Endothelial cell of umbilical vein (primary cell): ENCODE measurements at regions of chr2 and their contacts with region 1.

Region 1: DNA sequence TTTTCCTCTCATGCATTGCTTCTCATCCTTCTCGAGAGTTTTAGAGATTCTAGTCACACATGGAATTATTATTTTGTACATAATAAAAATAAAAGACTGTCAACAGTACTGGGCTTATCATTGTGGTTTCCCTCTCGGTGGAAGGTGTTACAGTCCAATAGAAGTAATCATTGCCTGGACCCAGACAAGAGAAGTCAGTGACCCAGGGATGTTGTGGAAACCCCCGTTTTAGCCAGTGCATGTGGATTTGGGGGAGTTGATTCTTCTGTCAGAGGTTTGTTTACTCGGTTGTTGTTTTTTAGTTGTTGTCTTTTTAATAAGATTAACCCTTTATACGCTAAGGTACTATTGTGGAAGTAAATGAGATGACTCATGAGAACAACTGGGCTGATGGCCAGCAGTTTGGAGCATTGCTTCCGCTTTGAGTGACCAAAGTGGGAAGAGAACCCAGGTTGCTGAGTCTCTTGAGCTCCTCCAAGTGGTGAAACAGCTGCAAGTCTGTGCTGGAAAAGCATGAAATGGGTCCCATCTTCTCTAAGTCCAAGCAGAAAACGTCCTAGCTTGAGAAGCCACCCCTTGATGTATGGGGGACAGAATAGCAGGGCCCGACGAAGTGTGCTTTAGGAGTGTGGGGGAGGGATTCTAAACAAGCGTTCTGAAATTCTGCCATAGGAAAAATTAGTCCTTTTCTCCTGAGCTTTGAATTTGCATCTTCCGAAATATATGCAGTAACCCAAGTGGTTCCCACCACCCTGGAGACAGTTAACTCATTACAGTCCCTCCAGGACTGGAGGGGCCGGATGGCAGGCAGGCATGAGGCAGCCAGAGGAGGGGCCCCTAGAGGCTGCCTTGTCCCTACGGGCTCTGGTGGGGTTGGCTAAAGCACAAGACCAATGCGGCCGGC is 61.8 kb upstream of the GPR45 start:
- DNase-seq: peak; percentile 77
- H3K4me3 ChIP-seq: no peak overlapping the region
- H3K27ac ChIP-seq: no peak overlapping the region
- H3K4me1 ChIP-seq: no peaks in the 10 kb centered on the region
- H3K27me3 ChIP-seq: peaks cover 6 to 11% of the 10 kb centered on the region in 2 experiments
- CTCF ChIP-seq: peak; percentile 33 to 64
- POLR2A ChIP-seq: no peak

Region 2: GRCh38 chr2:105081006-105081601 is 98.6 kb before region 1 on chr2:
- CTCF ChIA-PET with region 1: no interaction called
- POLR2A ChIA-PET with region 1: no interaction called
- dilution Hi-C with region 1: no loop called
- intact Hi-C with region 1: no loop called
- DNase-seq: peak; percentile 38
- H3K4me3 ChIP-seq: no peak overlapping the region
- H3K27ac ChIP-seq: no peak overlapping the region
- H3K4me1 ChIP-seq: no peaks in the 10 kb centered on the region
- H3K27me3 ChIP-seq: no peaks in the 10 kb centered on the region
- CTCF ChIP-seq: no peak
- POLR2A ChIP-seq: no peak

Region 3: DNA sequence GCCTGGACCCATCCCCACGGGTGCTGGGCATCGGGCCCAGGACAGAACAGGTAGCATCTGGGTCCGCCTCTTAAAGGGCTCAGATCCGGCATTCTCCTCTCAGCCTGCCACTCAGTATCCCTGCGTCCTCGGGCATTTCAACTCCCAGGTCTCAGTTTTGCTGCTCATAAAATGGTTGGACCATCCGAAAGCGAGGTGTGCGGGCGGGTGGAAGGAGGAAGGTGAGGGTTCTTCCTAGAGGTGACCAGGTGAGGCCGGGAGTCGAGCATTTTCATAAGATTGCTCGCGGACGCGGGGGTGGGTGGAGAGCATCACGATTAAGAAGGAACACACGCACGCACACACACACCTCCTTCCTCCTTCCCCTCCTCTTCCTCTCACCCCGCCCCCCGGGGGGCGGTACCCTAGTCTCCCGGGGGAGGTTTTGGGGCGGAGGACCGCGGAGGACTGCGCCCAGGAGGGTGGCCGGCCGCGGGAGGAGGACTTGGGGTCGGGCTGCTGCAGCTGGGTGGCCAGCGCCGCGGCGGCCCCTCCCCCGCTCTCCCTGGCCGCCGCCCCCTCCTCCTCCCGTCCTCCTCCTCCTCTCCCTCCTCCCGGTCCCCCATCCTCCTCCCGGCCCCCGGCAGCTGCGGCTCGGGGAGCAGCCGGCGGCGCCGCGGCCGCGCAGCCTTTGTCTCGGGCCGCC is 36.1 kb before region 1 on chr2:
- CTCF ChIA-PET with region 1: no interaction called
- POLR2A ChIA-PET with region 1: no interaction called
- dilution Hi-C with region 1: no loop called
- intact Hi-C with region 1: loop called (anchors 5 kb)
- DNase-seq: no peak
- H3K4me3 ChIP-seq: peak overlapping the region in 1 of 3 experiments; percentile 11
- H3K27ac ChIP-seq: no peak overlapping the region
- H3K4me1 ChIP-seq: no peaks in the 10 kb centered on the region
- H3K27me3 ChIP-seq: peaks cover 23 to 45% of the 10 kb centered on the region in 2 experiments
- CTCF ChIP-seq: no peak
- POLR2A ChIP-seq: no peak

Region 4: DNA sequence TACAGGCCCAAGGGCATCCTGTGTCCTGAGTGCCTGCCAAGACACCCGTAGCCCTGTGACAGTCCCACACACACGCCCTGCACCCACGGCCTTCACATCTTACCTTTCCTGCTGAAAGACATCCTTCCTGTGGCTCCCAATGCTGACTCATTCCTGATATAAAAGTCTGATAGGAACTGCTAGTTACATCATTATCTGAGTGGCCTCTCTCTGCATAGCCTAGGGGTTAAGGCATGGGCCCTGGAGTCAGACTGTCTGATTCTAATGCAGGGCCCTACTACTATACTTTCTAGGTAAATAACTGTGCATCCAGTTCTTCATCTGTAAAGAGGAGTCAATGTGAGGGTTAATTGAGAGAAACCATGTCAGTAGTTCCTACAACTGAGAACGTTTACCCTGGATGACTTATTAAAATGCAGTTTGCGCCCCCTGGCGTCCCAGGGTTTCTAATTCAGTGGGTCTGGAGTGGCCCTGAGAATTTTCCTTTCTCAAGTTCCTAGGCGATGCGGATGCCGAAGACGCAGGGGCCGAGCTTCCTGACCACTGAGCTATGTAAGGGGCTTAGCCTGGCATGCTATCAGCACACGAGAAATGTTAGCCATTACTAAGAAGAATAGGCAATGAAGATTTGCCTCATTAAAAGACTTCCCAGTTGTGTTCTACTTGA is 55.8 kb after region 1 on chr2:
- CTCF ChIA-PET with region 1: interaction called, 10 read pairs
- POLR2A ChIA-PET with region 1: no interaction called
- dilution Hi-C with region 1: no loop called
- intact Hi-C with region 1: loop called (anchors 1 kb)
- DNase-seq: peak; percentile 73
- H3K4me3 ChIP-seq: no peak overlapping the region
- H3K27ac ChIP-seq: no peak overlapping the region
- H3K4me1 ChIP-seq: peaks cover 4% of the 10 kb centered on the region
- H3K27me3 ChIP-seq: peaks cover 2 to 7% of the 10 kb centered on the region in 2 experiments
- CTCF ChIP-seq: peak; percentile 70 to 79
- POLR2A ChIP-seq: no peak